B cell (primary cell): ENCODE measurements at regions of chr3 and their contacts with region 1.

Region 1: DNA sequence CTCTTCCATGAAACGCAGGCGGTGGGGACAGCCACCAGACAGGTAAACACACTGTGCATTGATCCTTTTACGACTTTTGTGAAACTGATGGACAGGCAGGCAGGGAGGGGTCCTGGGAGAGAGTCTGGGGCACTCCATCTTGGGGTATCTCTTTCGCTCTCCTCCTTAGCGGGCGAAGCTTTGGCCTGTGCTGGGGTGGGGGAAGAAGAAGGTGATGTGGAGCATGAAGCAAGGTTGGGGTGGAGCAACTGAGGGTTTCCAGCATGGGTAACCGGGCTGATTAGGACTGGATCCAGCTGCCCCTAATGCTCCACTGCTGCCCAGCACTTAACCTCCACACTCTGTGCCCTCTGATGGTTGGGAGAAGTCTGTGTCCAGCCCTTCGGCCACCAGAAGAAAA is 25.6 kb downstream of the MUC20 start:
- DNase-seq: no peak
- ATAC-seq: no peak
- H3K4me3 ChIP-seq: no peak overlapping the region
- H3K4me3 Mint-ChIP-seq: no peak overlapping the region
- H3K27ac ChIP-seq: no peak overlapping the region
- H3K27ac Mint-ChIP-seq: no peak overlapping the region
- H3K4me1 ChIP-seq: peaks cover 3 to 5% of the 10 kb centered on the region in 2 donors
- H3K4me1 Mint-ChIP-seq: peaks cover 15% of the 10 kb centered on the region
- H3K27me3 ChIP-seq: peaks cover 0 to 23% (median 1%) of the 10 kb centered on the region in 4 experiments
- H3K27me3 Mint-ChIP-seq: peaks cover 16% of the 10 kb centered on the region
- CTCF ChIP-seq: no peak

Region 2: DNA sequence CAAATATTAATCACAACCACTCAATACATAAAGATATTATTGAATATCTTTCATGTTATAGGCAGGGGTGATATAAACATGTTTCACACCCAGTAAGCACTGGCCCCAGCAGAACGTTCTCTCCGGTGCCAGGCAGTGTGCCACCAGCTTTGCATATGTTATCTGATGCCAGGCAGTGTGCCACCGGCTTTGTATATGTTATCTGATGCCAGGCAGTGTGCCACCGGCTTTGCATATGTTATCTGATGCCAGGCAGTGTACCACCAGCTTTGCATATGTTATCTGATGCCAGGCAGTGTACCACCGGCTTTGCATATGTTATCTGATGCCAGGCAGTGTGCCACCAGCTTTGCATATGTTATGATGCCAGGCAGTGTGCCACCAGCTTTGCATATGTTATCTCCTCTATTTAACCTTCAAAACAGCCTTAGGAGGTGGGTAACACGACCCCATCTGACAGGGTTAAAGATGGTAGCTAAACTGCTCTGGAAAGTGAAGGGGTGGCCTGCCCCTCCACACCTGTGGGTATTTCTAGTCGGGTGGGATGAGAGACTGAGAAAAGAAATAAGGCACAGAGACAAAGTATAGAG is 18.6 kb before region 1 on chr3:
- CTCF ChIA-PET with region 1: interaction called, 11 read pairs
- POLR2A ChIA-PET with region 1: interaction called, 5 read pairs
- intact Hi-C with region 1: loop called (anchors 1 kb)
- DNase-seq: no peak
- ATAC-seq: peak; percentile 36
- H3K4me3 ChIP-seq: no peak overlapping the region
- H3K4me3 Mint-ChIP-seq: no peak overlapping the region
- H3K27ac ChIP-seq: no peak overlapping the region
- H3K27ac Mint-ChIP-seq: peak overlapping the region; percentile 3
- H3K4me1 ChIP-seq: peaks cover 0 to 7% of the 10 kb centered on the region in 2 donors
- H3K4me1 Mint-ChIP-seq: peaks cover 9% of the 10 kb centered on the region
- H3K27me3 ChIP-seq: no peaks in the 10 kb centered on the region
- H3K27me3 Mint-ChIP-seq: peaks cover 21% of the 10 kb centered on the region
- CTCF ChIP-seq: no peak

Region 3: DNA sequence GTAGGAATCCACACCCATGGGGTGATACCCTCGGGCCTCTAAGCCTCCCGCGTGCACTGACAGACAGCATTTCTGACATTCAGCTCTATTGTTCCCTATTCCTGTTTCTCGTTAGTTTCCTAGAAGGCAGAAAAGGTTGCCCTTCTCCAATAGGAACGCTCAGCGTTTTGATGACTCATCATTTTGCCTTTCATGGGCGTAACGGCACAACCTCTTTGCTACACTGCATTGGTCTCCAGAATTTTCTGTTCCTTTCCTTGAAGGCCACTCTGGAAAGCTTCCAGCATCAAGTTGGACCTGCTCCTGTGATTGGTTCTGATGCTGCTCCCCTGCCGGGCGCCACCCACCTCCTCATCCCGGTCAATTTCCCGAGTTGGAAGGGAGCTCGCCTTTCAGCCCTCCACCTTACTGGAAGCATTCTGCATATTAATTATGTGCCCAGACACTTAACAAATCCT is 175.0 kb after region 1 on chr3:
- CTCF ChIA-PET with region 1: no interaction called
- POLR2A ChIA-PET with region 1: no interaction called
- intact Hi-C with region 1: no loop called
- DNase-seq: no peak
- ATAC-seq: no peak
- H3K4me3 ChIP-seq: no peak overlapping the region
- H3K4me3 Mint-ChIP-seq: no peak overlapping the region
- H3K27ac ChIP-seq: no peak overlapping the region
- H3K27ac Mint-ChIP-seq: no peak overlapping the region
- H3K4me1 ChIP-seq: no peaks in the 10 kb centered on the region
- H3K4me1 Mint-ChIP-seq: no peaks in the 10 kb centered on the region
- H3K27me3 ChIP-seq: no peaks in the 10 kb centered on the region
- H3K27me3 Mint-ChIP-seq: no peaks in the 10 kb centered on the region
- CTCF ChIP-seq: no peak